Left lung (tissue), 14 donors: ENCODE measurements at regions of chr5 and their contacts with region 1.

Region 1: DNA sequence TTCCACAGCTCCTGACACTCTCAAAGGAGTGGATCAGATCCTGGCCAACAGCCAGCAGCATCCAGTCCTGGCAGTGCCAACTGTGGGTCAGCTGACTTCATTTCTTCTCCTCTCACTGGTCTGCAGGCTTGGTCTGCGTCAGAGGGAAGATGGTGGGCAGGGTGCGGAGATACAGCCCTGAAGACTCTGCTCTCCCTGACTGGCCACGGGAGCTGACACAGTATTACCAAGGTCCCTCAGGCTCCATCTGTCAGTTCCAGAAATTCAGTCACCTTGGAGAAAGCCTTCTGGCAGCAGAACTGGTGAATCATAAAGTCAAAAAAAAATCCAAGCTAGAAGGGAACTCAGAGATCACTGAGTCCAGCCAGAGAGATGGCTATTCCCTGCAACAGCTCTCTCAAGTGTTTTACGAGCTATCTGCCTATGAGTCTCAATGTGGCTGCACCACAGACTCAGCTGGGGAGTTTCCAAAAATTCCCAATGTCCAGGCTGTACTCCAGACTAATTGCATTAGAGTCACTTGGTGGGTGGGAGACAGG is 28.0 kb downstream of the C1QTNF2 start:
- DNase-seq: no peak
- ATAC-seq: peak; percentile 28
- H3K4me3 ChIP-seq: no peak overlapping the region
- H3K27ac ChIP-seq: no peak overlapping the region
- H3K4me1 ChIP-seq: peaks cover 0 to 7% of the 10 kb centered on the region in 2 donors
- H3K27me3 ChIP-seq: no peaks in the 10 kb centered on the region
- CTCF ChIP-seq: no peak

Region 2: GRCh38 chr5:160021831-160022446 is 320.5 kb before region 1 on chr5:
- intact Hi-C with region 1: loop called in 1 of 2 experiments (anchors 5 kb)
- DNase-seq: peak in 2 of 4 donors; percentile 71 to 81
- ATAC-seq: peak; percentile 93
- H3K4me3 ChIP-seq: no peak overlapping the region
- H3K27ac ChIP-seq: peak overlapping the region in 1 of 2 donors; percentile 13
- H3K4me1 ChIP-seq: peaks cover 0 to 47% of the 10 kb centered on the region in 2 donors
- H3K27me3 ChIP-seq: no peaks in the 10 kb centered on the region
- CTCF ChIP-seq: peak; percentile 67 to 79

Region 3: GRCh38 chr5:160199410-160199911 is 143.0 kb before region 1 on chr5:
- intact Hi-C with region 1: loop called in 1 of 2 experiments (anchors 5 kb)
- DNase-seq: peak; percentile 71 to 98 (median 74)
- ATAC-seq: peak; percentile 100
- H3K4me3 ChIP-seq: peak overlapping the region; percentile 6 to 30
- H3K27ac ChIP-seq: no peak overlapping the region
- H3K4me1 ChIP-seq: peaks cover 0 to 14% of the 10 kb centered on the region in 2 donors
- H3K27me3 ChIP-seq: peaks cover 0 to 10% of the 10 kb centered on the region in 2 donors
- CTCF ChIP-seq: peak; percentile 96 to 98